Ascending aorta (tissue), 2 donors: ENCODE measurements at regions of chr2 and their contacts with region 1.

Region 1: GRCh38 chr2:64330281-64331113 is 123.5 kb upstream of the LGALSL start:
- DNase-seq: peak in 1 of 2 donors; percentile 88
- H3K4me3 ChIP-seq: peak overlapping the region; percentile 42 to 47
- H3K27ac ChIP-seq: peak overlapping the region; percentile 88 to 93
- H3K4me1 ChIP-seq: peaks cover 13 to 35% of the 10 kb centered on the region in 2 donors
- H3K27me3 ChIP-seq: no peaks in the 10 kb centered on the region
- CTCF ChIP-seq: peak; percentile 93 to 95 (median 95)

Region 2: DNA sequence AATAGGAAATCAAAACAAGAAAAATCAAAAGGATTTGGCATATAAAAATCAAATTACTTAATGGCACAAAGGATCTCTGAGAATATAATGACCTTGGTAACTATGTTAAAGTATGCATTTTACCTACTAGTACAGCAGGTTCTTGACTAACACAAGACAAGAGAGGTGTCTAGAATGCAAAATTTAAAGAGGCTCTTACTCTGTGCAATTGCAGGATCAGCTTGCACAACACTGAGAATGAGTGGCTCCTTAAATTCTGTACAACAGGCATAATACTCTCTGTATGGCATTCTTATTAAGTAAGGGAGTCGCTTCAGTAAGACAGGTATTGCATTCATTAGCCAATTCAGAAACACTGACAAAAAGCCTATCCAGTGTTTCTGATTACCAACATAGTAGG is 416.2 kb before region 1 on chr2:
- intact Hi-C with region 1: no loop called
- DNase-seq: no peak
- H3K4me3 ChIP-seq: no peak overlapping the region
- H3K27ac ChIP-seq: no peak overlapping the region
- H3K4me1 ChIP-seq: no peaks in the 10 kb centered on the region
- H3K27me3 ChIP-seq: no peaks in the 10 kb centered on the region
- CTCF ChIP-seq: no peak

Region 3: GRCh38 chr2:64359892-64360657 is 29.6 kb after region 1 on chr2:
- intact Hi-C with region 1: loop called (anchors 1 kb)
- DNase-seq: peak; percentile 90 to 97
- H3K4me3 ChIP-seq: no peak overlapping the region
- H3K27ac ChIP-seq: peak overlapping the region; percentile 72 to 78
- H3K4me1 ChIP-seq: peaks cover 0 to 10% of the 10 kb centered on the region in 2 donors
- H3K27me3 ChIP-seq: no peaks in the 10 kb centered on the region
- CTCF ChIP-seq: no peak

Region 4: DNA sequence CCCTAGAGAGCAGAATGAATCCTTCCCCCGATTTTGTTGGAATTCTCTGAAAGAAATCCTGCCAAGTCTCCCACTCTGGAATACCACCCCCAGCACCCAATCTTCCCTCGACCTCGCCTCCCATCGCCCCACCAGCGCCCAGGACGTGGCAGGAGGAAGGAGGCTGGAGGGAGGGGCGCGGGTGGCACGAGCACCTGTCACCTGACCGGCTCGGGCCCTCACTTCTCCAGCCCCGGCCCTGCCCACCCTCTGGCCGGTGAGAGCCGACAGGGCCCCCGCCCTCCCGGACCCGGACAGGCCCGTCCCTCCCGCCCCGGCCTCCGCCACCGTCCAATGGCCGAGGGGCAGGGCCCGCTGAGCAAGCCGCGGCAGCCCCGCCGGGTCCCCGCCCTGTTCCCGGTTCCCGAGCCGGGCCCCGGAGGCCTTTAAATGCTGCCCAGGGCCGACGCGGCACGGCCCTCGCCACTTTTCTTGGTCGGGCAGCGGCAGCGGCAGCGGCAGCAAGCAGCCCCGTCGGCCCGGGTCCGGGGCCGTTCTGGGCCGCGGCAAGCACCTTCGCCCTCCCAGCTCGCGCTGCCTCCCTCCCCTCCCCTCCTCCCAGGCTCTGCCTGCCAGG is 123.4 kb after region 1 on chr2 and contains the start of gene LGALSL:
- intact Hi-C with region 1: loop called (anchors 2 kb)
- DNase-seq: peak; percentile 50 to 90
- H3K4me3 ChIP-seq: peak within 1 kb of the TSS; percentile 76 to 93
- H3K27ac ChIP-seq: peak within 1 kb of the TSS; percentile 98 to 99
- H3K4me1 ChIP-seq: peaks cover 5% of the 10 kb centered on the region in 2 donors
- H3K27me3 ChIP-seq: no peaks in the 10 kb centered on the region
- CTCF ChIP-seq: no peak
- total RNA-seq, gene LGALSL: 35.4 TPM

Region 5: DNA sequence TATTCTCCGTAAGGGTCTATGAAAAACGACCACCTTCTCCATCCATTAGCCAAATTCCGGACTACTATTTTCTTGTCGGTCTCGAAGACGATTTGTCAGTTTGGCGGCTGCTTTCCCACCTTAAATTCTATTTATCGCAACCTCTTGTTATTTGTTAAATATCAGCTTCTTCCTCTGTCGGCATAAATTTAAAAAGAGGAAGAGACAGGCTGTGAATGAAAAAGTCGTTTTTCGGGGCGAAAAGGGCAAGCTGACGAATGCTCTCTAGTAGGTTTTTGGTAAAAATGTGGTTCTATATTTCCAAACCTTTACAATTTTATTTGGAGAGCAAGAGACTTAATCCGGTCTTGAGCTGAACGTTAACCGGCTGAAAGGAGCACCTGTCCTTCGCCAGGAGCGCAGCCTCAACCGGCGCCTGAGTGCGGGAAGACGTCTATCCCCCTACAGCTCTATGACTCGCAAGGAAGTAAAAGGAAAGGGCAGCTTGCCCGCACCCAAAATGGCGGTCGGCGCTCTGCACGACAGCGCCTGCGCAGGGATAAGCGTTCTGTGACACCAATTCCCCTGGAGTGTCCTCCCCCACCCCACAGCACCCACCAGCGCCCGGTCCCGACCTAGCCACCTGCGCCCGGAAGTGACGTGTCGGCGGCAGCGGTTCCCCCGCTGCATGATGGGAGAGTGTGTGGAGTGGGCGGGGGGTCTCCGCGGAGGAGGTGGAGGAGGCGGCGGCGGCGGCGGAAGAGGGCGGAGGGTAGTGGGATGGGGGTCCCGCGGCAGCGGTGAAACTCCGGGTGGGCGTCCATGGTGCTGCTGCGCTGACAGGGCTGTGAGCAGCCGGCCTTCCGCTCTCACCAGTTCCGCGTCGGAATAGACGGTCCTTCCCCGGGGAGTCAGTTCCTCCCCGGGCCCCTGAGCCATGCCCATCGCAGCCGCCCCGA is 193.4 kb after region 1 on chr2 and contains the start of gene AFTPH:
- intact Hi-C with region 1: loop called (anchors 1 kb)
- DNase-seq: peak; percentile 98 to 99
- H3K4me3 ChIP-seq: peak within 1 kb of the TSS; percentile 64 to 99
- H3K27ac ChIP-seq: peak within 1 kb of the TSS; percentile 93 to 98
- H3K4me1 ChIP-seq: peaks cover 0 to 2% of the 10 kb centered on the region in 2 donors
- H3K27me3 ChIP-seq: no peaks in the 10 kb centered on the region
- CTCF ChIP-seq: no peak
- total RNA-seq, gene AFTPH: 58.0 TPM

Region 6: GRCh38 chr2:64562148-64562784 is 231.8 kb after region 1 on chr2:
- intact Hi-C with region 1: loop called (anchors 2 kb)
- DNase-seq: no peak
- H3K4me3 ChIP-seq: no peak overlapping the region
- H3K27ac ChIP-seq: no peak overlapping the region
- H3K4me1 ChIP-seq: no peaks in the 10 kb centered on the region
- H3K27me3 ChIP-seq: no peaks in the 10 kb centered on the region
- CTCF ChIP-seq: peak; percentile 13 to 47 (median 34)

Region 7: DNA sequence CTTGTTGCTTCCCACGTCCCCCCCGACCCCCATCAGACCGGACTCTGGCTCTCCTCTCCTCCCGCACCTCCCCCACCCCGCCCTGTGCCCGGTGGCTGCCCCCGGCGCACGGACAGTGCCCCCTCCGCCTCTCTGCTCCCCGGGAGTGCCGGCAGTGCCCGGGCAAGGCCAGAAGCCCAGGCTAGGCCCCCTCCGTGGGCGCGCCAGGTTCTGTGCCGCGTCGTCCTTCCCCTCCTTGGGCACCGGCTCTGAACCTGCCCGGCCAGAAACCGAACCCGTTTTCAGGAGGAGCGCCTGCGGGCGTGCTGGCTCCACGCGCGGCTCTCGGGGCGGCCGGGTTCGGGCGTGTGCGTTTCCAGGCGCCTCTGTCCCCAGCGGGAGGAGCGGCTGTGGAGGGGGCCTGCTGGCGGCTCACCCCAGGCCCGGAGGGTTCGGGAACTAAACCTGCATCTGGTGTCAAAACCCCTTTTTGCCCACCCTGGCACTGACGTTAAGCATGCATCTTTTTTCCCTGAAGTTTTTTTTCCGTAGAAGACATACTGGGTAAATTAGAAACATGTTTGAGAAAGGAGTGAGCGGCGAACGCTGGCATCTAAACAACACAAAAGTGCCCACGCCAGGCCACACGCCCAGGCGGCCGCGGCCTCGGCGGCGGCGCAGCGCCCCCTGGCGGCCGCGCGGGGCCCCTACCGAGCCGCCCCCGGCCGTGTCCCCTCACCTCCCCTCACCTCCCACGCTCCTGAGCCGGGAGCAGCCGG is 534.8 kb after region 1 on chr2:
- intact Hi-C with region 1: loop called (anchors 2 kb)
- DNase-seq: peak in 1 of 2 donors; percentile 84
- H3K4me3 ChIP-seq: peak overlapping the region; percentile 71 to 75
- H3K27ac ChIP-seq: peak overlapping the region; percentile 80 to 82
- H3K4me1 ChIP-seq: peaks cover 0 to 4% of the 10 kb centered on the region in 2 donors
- H3K27me3 ChIP-seq: no peaks in the 10 kb centered on the region
- CTCF ChIP-seq: peak; percentile 41 to 98 (median 47)